Gastrocnemius medialis (tissue), 4 donors: ENCODE measurements at regions of chr15 and their contacts with region 1.

Region 1: DNA sequence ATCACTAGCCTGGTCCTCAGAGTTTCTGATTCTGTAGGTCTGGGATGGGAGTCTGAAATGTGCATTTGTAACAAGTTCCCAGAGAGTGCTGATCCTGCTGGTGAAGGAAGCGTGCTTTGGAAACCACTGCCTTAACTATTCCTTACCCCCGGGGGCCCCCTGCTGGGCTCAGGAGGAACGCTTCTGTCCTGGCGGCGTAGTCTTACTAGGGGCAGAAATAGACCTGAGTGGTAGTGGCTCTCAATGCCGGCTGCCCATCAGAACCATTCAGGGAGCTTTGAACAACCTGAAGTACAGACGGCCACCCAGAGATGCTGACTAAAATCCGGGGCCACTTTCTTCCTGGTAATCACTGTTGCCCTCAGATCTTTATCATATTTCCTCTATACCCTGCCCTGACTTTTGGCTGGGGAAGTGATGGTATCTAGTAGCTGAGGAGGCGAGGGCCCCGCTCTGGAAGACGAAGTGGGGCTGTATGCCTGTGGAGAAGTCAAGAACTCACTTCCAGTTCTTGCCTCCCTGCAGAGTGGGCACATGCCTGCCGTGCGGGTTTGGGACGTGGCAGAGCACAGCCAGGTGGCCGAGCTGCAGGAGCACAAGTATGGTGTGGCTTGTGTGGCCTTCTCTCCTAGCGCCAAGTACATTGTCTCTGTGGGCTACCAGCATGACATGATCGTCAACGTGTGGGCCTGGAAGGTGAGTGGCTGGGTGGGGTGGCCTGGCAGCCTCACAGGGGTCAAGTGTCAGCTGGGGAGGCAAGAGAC is 16.3 kb upstream of the JMJD7 start:
- DNase-seq: peak; percentile 67 to 80
- ATAC-seq: peak; percentile 94 to 97
- H3K4me3 ChIP-seq: no peak overlapping the region
- H3K27ac ChIP-seq: no peak overlapping the region
- H3K4me1 ChIP-seq: no peaks in the 10 kb centered on the region
- H3K27me3 ChIP-seq: no peaks in the 10 kb centered on the region
- CTCF ChIP-seq: peak; percentile 87 to 93 (median 93)
- POLR2A ChIP-seq: no peak

Region 2: GRCh38 chr15:41603941-41604911 is 207.4 kb before region 1 on chr15:
- in situ Hi-C with region 1: loop called in 2 of 4 experiments (anchors 10 to 25 kb)
- intact Hi-C with region 1: loop called (anchors 5 kb)
- DNase-seq: peak; percentile 26 to 34
- ATAC-seq: peak; percentile 88
- H3K4me3 ChIP-seq: peak overlapping the region in 3 of 4 donors; percentile 8 to 43 (median 25)
- H3K27ac ChIP-seq: no peak overlapping the region
- H3K4me1 ChIP-seq: peaks cover 0 to 7% of the 10 kb centered on the region in 2 donors
- H3K27me3 ChIP-seq: no peaks in the 10 kb centered on the region
- CTCF ChIP-seq: peak; percentile 19 to 78 (median 62)
- POLR2A ChIP-seq: no peak

Region 3: GRCh38 chr15:41756198-41756597 is 55.4 kb before region 1 on chr15:
- in situ Hi-C with region 1: no loop called
- intact Hi-C with region 1: no loop called
- DNase-seq: no peak
- ATAC-seq: no peak
- H3K4me3 ChIP-seq: no peak overlapping the region
- H3K27ac ChIP-seq: no peak overlapping the region
- H3K4me1 ChIP-seq: no peaks in the 10 kb centered on the region
- H3K27me3 ChIP-seq: no peaks in the 10 kb centered on the region
- CTCF ChIP-seq: no peak
- POLR2A ChIP-seq: no peak